Activated CD4-positive, alpha-beta T cell treated with anti-CD3 and anti-CD28 coated beads, Interleukin-2, amount 10 ng/mL, durations not matched to agents 24 days and 14 days (primary cell): ENCODE measurements at regions of chr5 and their contacts with region 1.

Region 1: DNA sequence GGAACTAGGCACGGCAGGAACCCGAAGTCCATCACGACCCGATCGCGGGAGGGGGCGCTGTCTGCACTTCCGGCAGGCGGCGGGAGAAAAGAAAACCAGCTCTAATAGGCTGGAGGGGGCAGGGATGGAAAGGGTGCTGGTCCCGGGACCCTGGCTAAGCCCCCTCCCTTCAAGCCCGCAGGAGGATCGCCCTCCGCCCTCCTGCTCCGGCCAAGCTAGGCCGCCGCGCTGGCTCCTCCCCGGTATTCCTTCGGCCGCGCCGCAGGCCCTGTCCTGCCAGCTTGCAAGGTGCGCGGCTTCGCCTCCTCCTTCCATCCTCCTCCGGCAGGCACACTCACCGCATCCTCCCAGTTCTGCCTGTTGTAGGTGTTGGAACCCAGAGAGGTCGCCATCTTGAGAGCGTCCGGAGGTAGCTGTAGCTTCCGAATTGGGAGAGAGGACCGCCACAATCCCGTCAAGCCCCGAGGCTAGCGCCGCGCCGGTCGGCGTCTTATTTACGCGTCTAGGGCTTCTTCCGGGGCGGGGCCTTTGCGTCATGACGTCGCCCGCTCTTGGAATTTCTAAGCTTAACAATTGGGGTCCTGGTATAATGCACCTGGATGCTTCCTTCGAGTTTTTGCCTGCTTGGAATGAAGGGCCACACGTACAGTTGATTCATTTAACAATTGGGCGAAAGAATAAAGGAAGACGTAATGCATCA is at the start of gene RBM22:
- DNase-seq: peak; percentile 98
- H3K4me3 Mint-ChIP-seq: peak within 1 kb of the TSS; percentile 53
- H3K27ac Mint-ChIP-seq: no peak within 1 kb of the TSS
- H3K4me1 Mint-ChIP-seq: peaks cover 12% of the 10 kb centered on the region
- H3K27me3 Mint-ChIP-seq: no peaks in the 10 kb centered on the region
- total RNA-seq, gene RBM22: 69.6 and 78.4 TPM in 2 replicates

Region 2: GRCh38 chr5:150449517-150450339 is 251.0 kb before region 1 on chr5 and contains the start of gene RPS14:
- intact Hi-C with region 1: loop called (anchors 1 kb)
- DNase-seq: peak; percentile 98
- H3K4me3 Mint-ChIP-seq: peak within 1 kb of the TSS; percentile 93
- H3K27ac Mint-ChIP-seq: peak within 1 kb of the TSS; percentile 97
- H3K4me1 Mint-ChIP-seq: peaks cover 24% of the 10 kb centered on the region
- H3K27me3 Mint-ChIP-seq: no peaks in the 10 kb centered on the region
- total RNA-seq, gene RPS14: 2,567 and 2,587 TPM in 2 replicates

Region 3: GRCh38 chr5:150734579-150735384 is 34.0 kb after region 1 on chr5:
- intact Hi-C with region 1: loop called (anchors 5 kb)
- DNase-seq: peak; percentile 62
- H3K4me3 Mint-ChIP-seq: no peak overlapping the region
- H3K27ac Mint-ChIP-seq: peak overlapping the region; percentile 62
- H3K4me1 Mint-ChIP-seq: peaks cover 41% of the 10 kb centered on the region
- H3K27me3 Mint-ChIP-seq: no peaks in the 10 kb centered on the region

Region 4: GRCh38 chr5:150758531-150759333 is 58.0 kb after region 1 on chr5 and contains the start of gene DCTN4:
- intact Hi-C with region 1: loop called (anchors 1 kb)
- DNase-seq: peak; percentile 97
- H3K4me3 Mint-ChIP-seq: no peak within 1 kb of the TSS
- H3K27ac Mint-ChIP-seq: no peak within 1 kb of the TSS
- H3K4me1 Mint-ChIP-seq: peaks cover 28% of the 10 kb centered on the region
- H3K27me3 Mint-ChIP-seq: no peaks in the 10 kb centered on the region
- total RNA-seq, gene DCTN4: 43.9 and 44.8 TPM in 2 replicates

Region 5: DNA sequence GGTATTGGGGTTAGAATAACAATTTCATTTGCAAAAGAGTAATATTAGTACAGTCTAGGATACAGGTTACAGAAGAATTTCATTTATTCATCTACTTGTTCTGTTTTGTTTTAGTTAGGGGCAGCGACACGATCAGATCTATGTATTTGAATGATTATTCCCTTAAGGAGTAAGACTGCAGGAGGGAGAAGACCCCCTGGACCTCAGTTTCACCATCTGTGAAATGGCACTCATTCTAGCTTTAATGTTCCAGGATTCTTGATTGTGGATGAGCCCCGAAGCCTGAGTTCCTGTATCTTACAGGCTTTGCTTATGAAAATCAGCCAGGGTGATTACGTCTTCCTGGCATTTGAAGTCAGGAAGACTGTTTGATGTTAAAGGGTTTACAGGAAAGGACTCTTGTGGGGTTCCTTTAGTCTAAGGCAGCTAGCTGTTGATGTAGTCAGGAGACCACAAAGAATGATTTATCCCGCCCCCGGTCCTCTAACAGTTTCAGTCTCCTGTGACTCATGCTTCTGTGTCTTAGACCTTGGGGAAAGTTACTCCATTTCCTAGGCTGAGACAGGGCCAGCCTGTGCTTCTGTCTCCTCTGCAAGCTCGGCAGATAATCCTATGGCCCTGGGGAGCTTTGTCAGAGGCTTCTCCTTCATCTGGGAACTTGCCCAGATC is 89.3 kb after region 1 on chr5:
- intact Hi-C with region 1: loop called (anchors 2 kb)
- DNase-seq: peak; percentile 89
- H3K4me3 Mint-ChIP-seq: peak overlapping the region; percentile 82
- H3K27ac Mint-ChIP-seq: peak overlapping the region; percentile 84
- H3K4me1 Mint-ChIP-seq: peaks cover 55% of the 10 kb centered on the region
- H3K27me3 Mint-ChIP-seq: no peaks in the 10 kb centered on the region